Spleen (tissue), 13 donors: ENCODE measurements at regions of chr1 and their contacts with region 1.

Region 1: GRCh38 chr1:159214149-159214760 is 9.6 kb downstream of the ACKR1 start:
- DNase-seq: peak; percentile 68
- H3K4me3 ChIP-seq: no peak overlapping the region
- H3K27ac ChIP-seq: no peak overlapping the region
- H3K4me1 ChIP-seq: peaks cover 0 to 19% (median 11%) of the 10 kb centered on the region in 6 donors
- H3K27me3 ChIP-seq: peaks cover 0 to 58% (median 4%) of the 10 kb centered on the region in 7 donors
- CTCF ChIP-seq: peak; percentile 42 to 91 (median 82)
- POLR2A ChIP-seq: no peak

Region 2: DNA sequence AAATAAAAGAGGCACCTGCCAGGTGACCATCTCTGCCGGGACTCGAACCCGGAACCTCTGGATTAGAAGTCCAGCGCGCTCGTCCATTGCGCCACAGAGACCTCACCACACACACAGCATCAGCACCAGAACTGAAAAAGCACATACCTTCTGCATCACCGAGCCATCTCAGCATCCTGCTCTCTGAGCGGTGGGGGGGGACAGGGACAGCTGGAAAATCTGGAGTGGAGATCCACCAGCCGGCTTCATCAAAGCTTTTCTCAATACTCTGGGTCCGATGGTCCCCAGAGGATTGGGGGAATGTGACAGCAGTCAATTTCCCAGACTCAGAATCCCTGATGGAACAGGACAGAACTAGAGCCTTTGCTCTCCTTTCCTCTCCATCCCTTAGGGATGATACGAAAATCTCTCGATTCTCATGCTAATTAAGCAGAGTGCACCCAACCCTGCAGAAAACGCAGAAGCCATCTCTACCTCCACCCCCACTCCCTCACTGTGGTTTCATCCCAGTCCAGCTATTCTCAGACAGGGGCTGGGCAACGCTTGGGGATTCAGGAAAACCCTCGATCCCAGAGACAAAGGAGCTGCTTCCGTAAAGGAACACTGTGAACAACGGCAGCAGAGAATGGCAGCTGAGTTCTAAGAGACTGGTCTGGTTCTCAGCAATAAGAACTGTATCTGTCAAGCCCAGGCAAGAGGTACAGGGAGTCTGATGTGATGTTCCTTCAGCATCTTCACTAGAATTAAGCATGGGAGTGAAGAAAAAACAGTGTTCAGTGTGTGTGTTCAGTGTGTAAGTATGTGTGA is 72.5 kb before region 1 on chr1:
- intact Hi-C with region 1: no loop called
- DNase-seq: no peak
- H3K4me3 ChIP-seq: no peak overlapping the region
- H3K27ac ChIP-seq: no peak overlapping the region
- H3K4me1 ChIP-seq: peaks cover 0 to 5% (median 0%) of the 10 kb centered on the region in 6 donors
- H3K27me3 ChIP-seq: peaks cover 0 to 30% (median 4%) of the 10 kb centered on the region in 7 donors
- CTCF ChIP-seq: no peak
- POLR2A ChIP-seq: no peak

Region 3: GRCh38 chr1:159162516-159163265 is 51.6 kb before region 1 on chr1:
- intact Hi-C with region 1: loop called (anchors 2 kb)
- DNase-seq: no peak
- H3K4me3 ChIP-seq: no peak overlapping the region
- H3K27ac ChIP-seq: no peak overlapping the region
- H3K4me1 ChIP-seq: peaks cover 0 to 14% (median 3%) of the 10 kb centered on the region in 6 donors
- H3K27me3 ChIP-seq: peaks cover 0 to 22% (median 0%) of the 10 kb centered on the region in 7 donors
- CTCF ChIP-seq: no peak
- POLR2A ChIP-seq: no peak